ENCODE measurements at regions of chr13 and their contacts with region 1.

Region 1: DNA sequence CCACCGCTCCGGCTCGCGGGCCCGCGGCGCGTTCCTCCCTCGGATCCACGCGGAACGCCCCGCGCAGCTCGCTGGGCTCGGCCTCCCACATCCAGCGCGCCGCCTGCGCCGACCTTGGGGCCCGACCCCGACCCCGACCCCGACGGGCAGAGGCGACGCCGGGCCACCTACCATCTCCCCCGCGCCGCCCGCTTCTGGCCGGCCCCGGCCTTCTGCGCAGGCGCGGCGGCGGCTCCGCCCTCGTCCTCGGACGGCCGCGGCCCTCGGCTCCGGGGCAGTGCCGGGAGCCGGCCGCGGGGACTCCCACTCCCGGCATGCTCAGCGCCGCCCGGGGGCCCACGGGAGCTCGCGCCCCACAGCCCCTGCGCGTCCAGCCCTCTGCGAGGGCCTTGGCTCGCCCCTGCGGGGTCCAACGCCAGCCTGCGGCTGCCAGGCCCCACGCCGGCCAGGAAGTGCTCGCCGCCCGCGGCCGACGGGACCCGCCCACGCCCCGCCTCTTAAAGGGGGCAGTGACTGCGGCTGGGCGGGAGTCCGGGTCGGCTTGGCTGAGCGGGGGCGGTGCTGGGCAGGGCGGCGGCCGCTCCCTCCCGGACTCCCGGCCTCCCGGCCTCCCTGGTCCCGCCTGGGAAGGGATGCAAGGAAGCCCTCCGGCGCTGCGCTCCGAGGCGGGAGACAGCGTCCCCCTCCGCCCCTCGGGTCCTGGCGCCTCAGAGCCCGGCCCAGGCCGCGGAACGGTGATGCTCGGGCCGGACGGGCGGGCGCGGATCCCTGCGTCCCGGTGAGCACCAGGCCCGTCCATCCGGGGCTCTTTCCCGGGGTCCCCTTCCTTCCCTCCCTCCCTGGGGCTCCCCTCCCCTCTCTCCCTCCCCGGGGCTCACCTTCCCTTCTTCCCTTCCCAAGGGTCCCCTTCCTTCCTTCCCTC is at the start of gene DCUN1D2:
- DNase-seq: peak; percentile 97 to 98
- ATAC-seq: peak; percentile 98
- H3K4me3 ChIP-seq: peak within 1 kb of the TSS; percentile 79 to 96
- H3K27ac ChIP-seq: peak within 1 kb of the TSS; percentile 44 to 85
- H3K4me1 ChIP-seq: no peaks in the 10 kb centered on the region
- H3K27me3 ChIP-seq: no peaks in the 10 kb centered on the region
- total RNA-seq, gene DCUN1D2: 16.3 to 28.2 TPM

Region 2: GRCh38 chr13:113410472-113411201 is 80.1 kb before region 1 on chr13:
- intact Hi-C with region 1: loop called in 1 of 2 experiments (anchors 5 kb)
- DNase-seq: peak; percentile 79 to 91
- ATAC-seq: peak; percentile 43
- H3K4me3 ChIP-seq: no peak overlapping the region
- H3K27ac ChIP-seq: peak overlapping the region; percentile 24 to 84
- H3K4me1 ChIP-seq: peaks cover 0 to 1% of the 10 kb centered on the region in 2 donors
- H3K27me3 ChIP-seq: no peaks in the 10 kb centered on the region